ENCODE measurements at regions of chr6 and their contacts with region 1.

Region 1: GRCh38 chr6:100116411-100117194 is 122.6 kb upstream of the MCHR2 start:
- DNase-seq: no peak
- ATAC-seq: peak in 3 of 4 donors; percentile 56 to 90 (median 59)
- H3K4me3 ChIP-seq: no peak overlapping the region
- H3K27ac ChIP-seq: no peak overlapping the region
- H3K4me1 ChIP-seq: no peaks in the 10 kb centered on the region
- H3K27me3 ChIP-seq: no peaks in the 10 kb centered on the region
- CTCF ChIP-seq: peak; percentile 77

Region 2: DNA sequence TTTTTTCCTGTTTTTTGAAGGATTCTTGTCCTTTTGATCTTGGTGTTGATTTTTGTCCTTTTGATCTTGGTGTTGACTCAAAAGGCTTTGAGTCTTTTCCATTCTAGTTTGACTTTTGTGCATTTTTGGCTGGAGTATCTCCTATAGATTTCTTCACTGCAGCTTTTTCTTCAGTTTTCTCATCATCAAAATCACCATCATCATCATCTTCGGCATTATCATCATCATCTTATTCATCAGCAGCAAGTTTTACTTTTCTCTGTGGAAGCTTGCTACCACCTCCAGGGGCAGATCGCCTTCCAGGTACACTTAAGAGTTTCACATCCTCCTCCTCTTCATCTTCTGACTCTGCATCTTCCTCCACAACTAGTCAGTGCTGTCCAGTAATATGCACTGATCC is 66.1 kb before region 1 on chr6:
- intact Hi-C with region 1: no loop called
- DNase-seq: no peak
- ATAC-seq: no peak
- H3K4me3 ChIP-seq: no peak overlapping the region
- H3K27ac ChIP-seq: no peak overlapping the region
- H3K4me1 ChIP-seq: no peaks in the 10 kb centered on the region
- H3K27me3 ChIP-seq: no peaks in the 10 kb centered on the region
- CTCF ChIP-seq: no peak

Region 3: DNA sequence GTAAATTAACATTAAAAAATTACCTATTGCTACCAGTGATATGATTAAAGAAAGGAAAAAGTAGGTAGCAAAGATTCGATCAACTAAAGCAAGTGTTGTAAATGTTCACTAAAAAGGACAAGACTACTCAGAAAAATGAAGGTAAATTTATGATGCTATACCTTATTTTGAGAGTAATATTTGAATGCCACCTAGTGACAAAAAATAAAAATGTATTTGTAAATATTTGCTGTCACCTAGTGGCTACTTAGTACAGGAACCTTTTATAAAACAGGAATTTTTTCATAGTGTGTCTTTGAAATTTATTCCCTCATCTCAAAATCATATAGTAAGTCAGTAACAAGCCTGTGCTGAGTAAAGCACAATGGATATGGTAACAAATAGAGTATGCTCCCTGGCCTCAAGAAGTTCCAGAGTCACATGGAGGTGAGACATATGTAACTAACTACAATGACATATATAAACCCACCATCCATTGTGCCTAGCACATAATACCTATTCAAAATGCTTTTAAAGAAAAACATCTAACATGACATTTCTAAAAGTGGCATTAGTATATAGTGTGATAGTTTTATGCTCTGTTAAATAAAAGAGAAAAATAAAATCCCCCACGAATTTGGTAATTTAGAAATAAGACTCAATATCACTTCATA is 541.2 kb after region 1 on chr6:
- intact Hi-C with region 1: loop called (anchors 5 kb)
- DNase-seq: no peak
- ATAC-seq: no peak
- H3K4me3 ChIP-seq: no peak overlapping the region
- H3K27ac ChIP-seq: no peak overlapping the region
- H3K4me1 ChIP-seq: no peaks in the 10 kb centered on the region
- H3K27me3 ChIP-seq: no peaks in the 10 kb centered on the region
- CTCF ChIP-seq: peak; percentile 56

Measured in psoas muscle (tissue), 8 donors.